WTC11 (cell line): ENCODE measurements at regions of chr9 and their contacts with region 1.

Region 1: DNA sequence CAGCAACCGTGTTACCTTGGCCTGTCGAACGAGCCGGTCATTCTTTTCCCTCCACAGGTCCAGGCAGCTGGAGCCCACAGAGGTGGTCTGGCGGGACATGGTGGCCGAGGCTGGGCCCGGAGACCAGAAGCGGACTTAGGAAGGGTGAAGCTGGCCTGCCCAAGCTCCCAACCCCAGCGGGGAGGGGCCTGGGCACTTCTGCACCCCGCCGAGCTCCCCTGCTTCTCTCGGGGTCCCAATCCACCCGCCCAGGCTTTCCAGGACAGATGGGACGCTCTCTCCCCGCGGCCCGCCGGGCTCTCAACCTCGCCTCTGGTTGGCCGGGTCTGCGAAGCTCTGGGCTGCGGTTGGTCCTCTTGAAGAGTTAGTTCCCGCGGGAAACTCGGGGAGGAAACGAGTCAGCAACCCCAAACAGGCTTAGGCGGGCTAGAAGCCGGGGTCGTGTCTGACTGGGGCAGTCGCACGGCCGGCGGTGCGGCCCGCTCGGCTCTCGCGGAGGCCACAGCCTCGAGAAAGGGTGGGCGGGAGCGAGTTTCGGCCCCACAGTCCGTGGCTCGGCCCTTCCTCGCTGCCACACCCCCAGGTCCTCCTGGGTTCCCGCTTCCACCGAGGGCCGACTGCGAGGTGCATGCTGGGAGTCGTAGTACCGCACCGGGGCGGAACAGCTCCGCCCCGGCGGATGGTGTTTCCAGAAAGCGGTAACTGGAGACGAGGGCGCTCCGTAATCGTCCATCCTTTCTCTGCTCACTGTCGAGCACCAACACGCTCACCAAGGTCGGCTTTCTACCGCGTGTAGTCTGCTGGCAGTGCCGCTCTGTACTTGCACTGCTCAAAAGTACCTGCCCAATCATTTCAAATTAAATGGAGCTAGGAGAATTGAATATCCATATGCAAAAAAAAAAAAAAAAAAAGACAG is at the start of gene FANCG:
- DNase-seq: peak; percentile 89
- ATAC-seq: peak; percentile 92
- H3K4me3 Mint-ChIP-seq: peak within 1 kb of the TSS; percentile 92
- H3K27ac Mint-ChIP-seq: peak within 1 kb of the TSS; percentile 99
- H3K4me1 Mint-ChIP-seq: peaks cover 15% of the 10 kb centered on the region
- H3K27me3 Mint-ChIP-seq: no peaks in the 10 kb centered on the region
- CTCF ChIP-seq: no peak
- total RNA-seq, gene FANCG: 80.9 to 108 TPM (median 89.1 TPM) in 3 replicates

Region 2: DNA sequence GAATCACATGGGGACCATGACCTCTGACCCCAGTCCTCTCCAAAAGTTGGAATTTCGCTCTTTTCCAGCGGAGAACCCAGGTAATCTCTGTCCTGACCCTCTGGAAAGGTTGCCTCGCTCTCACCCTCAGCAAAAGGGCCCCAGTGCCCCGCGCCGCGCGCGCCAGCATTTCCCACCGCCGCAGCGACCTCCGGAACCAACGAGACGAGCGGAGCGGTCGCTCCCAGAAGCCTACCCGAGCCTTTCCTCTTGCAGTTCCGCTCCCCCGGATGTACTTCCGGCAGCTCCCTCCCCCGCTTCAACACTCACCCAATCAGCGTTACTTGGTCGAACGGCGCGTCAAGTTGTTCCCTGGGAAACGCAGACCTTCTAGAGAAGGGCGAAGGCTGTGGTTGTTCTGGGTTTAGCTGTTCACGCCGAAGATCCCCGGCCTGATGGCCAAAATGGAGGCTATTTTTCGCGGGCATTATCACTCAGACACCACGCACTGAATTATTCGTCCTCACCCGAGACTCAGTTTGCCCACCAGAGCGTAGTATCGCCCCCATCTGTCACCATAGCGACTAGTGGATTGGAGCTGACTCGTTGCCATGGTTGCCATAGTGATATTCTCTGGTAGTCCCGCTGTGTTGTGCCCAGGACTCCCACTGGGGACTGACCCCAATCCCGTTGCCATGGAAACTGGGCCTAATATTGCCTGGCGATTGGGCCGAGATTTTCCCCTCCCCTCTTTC is 23.4 kb after region 1 on chr9 and contains the start of gene STOML2:
- CTCF ChIA-PET with region 1: interaction called, 3 read pairs
- POLR2A ChIA-PET with region 1: interaction called, 18 read pairs
- DNase-seq: peak; percentile 91
- ATAC-seq: peak; percentile 95
- H3K4me3 Mint-ChIP-seq: peak within 1 kb of the TSS; percentile 96
- H3K27ac Mint-ChIP-seq: peak within 1 kb of the TSS; percentile 99
- H3K4me1 Mint-ChIP-seq: peaks cover 16% of the 10 kb centered on the region
- H3K27me3 Mint-ChIP-seq: no peaks in the 10 kb centered on the region
- CTCF ChIP-seq: no peak
- total RNA-seq, gene STOML2: 208 to 214 TPM (median 210 TPM) in 3 replicates

Region 3: GRCh38 chr9:35152936-35153335 is 73.3 kb after region 1 on chr9:
- CTCF ChIA-PET with region 1: no interaction called
- POLR2A ChIA-PET with region 1: no interaction called
- DNase-seq: no peak
- ATAC-seq: no peak
- H3K4me3 Mint-ChIP-seq: no peak overlapping the region
- H3K27ac Mint-ChIP-seq: no peak overlapping the region
- H3K4me1 Mint-ChIP-seq: no peaks in the 10 kb centered on the region
- H3K27me3 Mint-ChIP-seq: peaks cover 5% of the 10 kb centered on the region
- CTCF ChIP-seq: no peak